H1 (cell line): ENCODE measurements at regions of chr3 and their contacts with region 1.

Region 1: DNA sequence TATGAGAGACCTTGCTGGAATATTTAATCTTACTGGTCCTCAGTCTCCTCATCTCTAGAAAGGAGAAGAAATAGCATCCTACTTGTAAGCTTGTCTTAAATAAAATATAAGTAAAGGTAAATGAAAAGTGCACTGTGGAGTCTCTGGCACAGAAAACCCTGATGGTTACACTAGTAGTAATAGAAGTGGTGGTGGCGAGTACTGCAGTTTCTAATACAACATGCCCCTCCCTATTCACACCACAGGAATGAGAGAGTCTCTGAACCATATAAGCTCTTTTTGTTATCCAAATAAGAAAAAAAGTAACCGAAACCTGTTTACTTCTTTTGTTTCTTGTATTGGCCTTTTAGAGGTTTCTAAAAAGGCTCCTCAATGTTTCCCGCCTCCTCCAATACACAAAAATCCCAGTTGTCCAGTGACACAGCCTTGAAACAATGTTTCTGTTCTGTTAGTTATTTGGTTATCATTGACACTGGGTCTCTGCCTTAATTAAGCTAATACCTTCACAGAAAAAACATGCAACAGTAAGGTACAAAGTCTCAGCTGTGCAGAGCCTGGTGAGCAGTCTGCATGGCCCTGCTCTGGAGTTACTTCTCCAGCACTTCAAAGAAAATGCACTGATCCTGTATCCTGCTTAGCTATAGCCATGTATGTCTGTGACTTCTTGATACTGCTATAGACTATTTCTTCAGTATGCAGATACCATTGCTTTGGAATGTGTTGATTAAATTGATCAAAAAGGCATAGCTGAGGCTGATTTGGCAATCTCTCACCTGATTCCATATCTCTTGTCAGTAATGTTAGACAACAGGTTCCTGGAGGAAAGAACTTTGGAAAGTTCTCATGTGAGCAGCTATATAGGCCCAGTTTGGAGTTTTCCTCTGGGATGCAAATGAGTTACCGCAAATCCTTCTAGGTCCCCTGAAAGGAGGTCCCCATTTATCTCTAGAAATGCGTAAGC is 315.6 kb upstream of the IL12A start:
- DNase-seq: no peak
- H3K4me3 ChIP-seq: no peak overlapping the region
- H3K27ac ChIP-seq: no peak overlapping the region
- H3K4me1 ChIP-seq: peaks cover 0 to 4% (median 1%) of the 10 kb centered on the region in 4 experiments; a peak in 2 of 7 replicates
- H3K27me3 ChIP-seq: no peaks in the 10 kb centered on the region
- CTCF ChIP-seq: peak in 1 of 3 experiments; percentile 11; a peak in 1 of 4 replicates
- EP300 ChIP-seq: no peak
- POLR2A ChIP-seq: no peak
- RAD21 ChIP-seq: no peak

Region 2: DNA sequence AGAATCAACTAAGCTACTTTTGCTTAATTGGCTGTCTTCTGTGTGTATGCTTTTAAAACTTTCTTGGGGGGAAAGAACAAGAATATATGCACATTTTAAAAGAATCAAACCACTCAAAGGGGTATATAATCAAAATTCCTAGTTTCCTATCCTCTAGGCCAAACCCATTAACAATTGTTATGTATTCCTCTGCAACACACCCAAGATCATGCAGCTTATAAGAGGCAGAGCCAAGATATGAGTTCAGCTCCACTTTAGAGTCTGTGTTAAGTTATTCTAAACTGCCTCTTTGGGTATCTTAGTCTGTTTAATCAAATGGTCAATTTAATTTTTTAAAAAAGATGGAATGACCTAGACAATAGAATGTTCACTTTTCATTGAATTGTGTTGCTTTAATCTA is 10.5 kb before region 1 on chr3:
- CTCF ChIA-PET with region 1: interaction called, 14 read pairs
- POLR2A ChIA-PET with region 1: no interaction called
- DNase-seq: no peak
- H3K4me3 ChIP-seq: no peak overlapping the region
- H3K27ac ChIP-seq: no peak overlapping the region
- H3K4me1 ChIP-seq: no peaks in the 10 kb centered on the region
- H3K27me3 ChIP-seq: no peaks in the 10 kb centered on the region
- CTCF ChIP-seq: no peak
- EP300 ChIP-seq: no peak
- POLR2A ChIP-seq: no peak
- RAD21 ChIP-seq: no peak

Region 3: DNA sequence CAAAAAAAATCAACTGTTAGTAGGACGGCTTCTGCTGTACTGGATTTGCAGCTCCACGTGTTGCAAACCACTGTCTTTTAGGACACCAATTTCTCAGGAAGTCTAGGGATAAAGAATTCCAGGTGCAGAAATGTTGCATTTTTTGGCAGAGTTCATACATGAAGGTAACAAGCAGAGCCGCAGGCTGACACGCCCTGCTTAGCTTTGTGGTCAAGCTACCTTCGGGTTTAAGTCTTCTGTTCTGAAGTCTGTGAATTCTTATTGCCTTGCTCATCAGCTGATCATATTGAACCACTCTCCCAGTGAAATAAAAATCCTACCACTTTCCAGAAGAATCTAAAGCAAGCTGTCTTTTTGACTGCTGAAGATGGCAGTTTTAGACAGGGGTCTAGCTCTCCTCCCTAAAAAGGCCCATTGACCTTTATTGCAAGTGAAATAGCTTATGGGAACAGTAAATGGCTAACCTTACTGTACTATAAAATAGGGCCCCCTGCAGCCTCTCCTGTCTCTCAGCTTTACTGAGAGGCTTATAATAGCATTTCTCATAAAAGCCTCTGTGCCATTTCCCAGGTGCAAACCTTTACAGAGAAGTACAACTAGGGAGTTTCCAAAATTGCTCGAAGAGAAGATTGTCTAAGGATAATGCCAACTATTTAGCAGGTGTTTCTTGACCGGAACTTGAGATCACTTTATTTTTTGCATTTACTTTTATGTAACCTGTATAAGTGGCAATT is 53.4 kb after region 1 on chr3:
- CTCF ChIA-PET with region 1: interaction called, 16 read pairs
- POLR2A ChIA-PET with region 1: no interaction called
- DNase-seq: no peak
- H3K4me3 ChIP-seq: no peak overlapping the region
- H3K27ac ChIP-seq: no peak overlapping the region
- H3K4me1 ChIP-seq: peaks cover 0 to 6% (median 0%) of the 10 kb centered on the region in 4 experiments; a peak in 1 of 7 replicates
- H3K27me3 ChIP-seq: no peaks in the 10 kb centered on the region
- CTCF ChIP-seq: no peak
- EP300 ChIP-seq: no peak
- POLR2A ChIP-seq: no peak
- RAD21 ChIP-seq: no peak

Region 4: DNA sequence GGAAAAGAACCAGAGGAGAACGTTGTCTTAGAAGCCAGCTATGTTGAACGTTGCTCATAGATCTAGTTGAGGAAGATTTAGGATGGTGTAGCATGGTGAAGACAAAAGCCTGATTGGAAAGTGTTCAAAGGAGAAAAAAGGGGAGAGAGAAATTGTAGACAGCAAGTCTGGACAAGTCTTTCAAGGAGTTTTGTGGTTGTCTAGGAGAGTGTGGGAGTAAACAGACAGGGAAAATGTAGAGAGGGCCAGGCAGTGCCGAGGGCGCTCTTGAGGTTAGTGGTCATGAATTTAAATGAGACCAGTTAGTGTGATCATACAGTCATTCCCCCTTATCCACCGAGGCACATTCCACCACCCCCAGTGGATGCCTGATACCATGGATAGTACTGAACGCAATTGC is 148.1 kb after region 1 on chr3:
- CTCF ChIA-PET with region 1: no interaction called
- POLR2A ChIA-PET with region 1: no interaction called
- DNase-seq: no peak
- H3K4me3 ChIP-seq: no peak overlapping the region
- H3K27ac ChIP-seq: no peak overlapping the region
- H3K4me1 ChIP-seq: peaks cover 2 to 3% (median 2%) of the 10 kb centered on the region in 4 experiments; a peak in 4 of 7 replicates
- H3K27me3 ChIP-seq: no peaks in the 10 kb centered on the region
- CTCF ChIP-seq: no peak
- EP300 ChIP-seq: no peak
- POLR2A ChIP-seq: no peak
- RAD21 ChIP-seq: no peak

Region 5: DNA sequence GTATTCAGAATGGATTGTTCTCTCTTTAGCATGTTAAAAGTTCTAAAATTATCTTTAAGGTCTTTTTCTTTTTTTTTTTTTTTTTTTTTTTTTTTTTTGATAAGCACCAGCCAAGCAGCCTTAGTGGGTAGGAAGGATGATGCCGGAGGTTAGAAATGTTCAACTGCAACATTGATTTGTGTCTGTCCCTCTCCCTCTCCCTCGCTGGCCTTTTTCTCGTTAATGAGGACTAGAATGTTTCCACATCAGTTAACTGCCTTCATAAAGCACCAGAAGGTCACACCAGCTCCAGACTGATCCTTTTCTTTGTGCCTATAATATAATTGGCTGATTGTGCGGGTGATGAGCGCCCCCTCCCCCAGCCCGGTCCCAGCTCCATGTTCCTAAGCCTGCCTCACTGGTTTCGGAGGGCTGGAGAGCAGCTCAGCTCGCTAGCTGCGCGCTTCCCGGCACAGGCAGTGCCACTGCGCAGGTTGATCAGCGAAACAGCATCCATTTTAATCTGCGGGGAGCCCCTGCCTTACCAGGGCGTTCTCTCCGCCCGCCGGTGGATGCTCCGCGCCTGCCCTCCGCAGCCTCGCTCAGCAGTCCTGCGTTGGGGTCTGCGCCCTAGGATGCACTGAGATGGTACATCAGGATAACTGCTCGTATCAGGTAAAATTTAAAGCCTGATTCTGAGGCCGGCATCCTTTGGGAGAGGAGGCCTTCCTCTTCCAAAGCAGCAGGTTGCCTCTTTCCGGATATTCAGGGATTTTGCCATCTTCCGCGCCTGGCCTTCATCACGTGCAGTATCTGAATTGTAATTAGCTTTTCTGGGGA is 166.8 kb after region 1 on chr3:
- CTCF ChIA-PET with region 1: no interaction called
- POLR2A ChIA-PET with region 1: no interaction called
- DNase-seq: peak; percentile 57 to 76
- H3K4me3 ChIP-seq: peak within 1 kb of the TSS; percentile 77 to 84 (median 80)
- H3K27ac ChIP-seq: peak within 1 kb of the TSS; percentile 93
- H3K4me1 ChIP-seq: peaks cover 0 to 8% (median 0%) of the 10 kb centered on the region in 4 experiments; a peak in 1 of 7 replicates
- H3K27me3 ChIP-seq: no peaks in the 10 kb centered on the region
- CTCF ChIP-seq: peak in 1 of 3 experiments; percentile 9; a peak in 1 of 4 replicates
- EP300 ChIP-seq: no peak
- POLR2A ChIP-seq: peak; percentile 88 to 89
- RAD21 ChIP-seq: no peak; a peak in 1 of 4 replicates

Region 6: DNA sequence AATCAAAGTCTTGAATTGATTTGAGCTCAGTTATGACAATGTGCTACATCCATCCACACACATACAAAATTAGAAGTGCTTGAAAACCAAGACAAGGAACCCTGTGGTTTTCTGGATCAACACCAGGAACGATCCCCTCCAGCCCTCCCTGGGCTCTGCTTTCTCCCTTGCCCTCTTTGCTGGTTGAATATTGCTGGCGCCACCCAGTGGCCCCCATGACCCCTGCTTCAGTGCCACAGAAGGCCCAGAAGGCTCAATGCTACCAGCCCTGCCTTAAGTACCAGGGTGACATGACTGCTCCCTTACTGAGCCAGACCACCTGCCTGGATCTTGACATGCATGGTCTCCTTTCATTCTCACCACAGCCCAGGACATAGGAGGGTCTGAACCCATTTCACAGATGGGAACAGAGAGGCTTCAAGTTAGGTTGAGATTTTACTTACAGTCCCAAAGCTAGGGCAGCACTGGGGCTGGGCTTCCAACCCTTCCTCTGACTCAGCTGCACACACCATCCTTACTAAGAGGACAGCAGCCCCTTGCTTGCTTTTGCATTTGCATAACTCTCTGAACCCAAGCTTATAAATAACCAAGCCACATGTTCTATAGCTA is 330.6 kb after region 1 on chr3:
- CTCF ChIA-PET with region 1: no interaction called
- POLR2A ChIA-PET with region 1: no interaction called
- DNase-seq: peak in 1 of 2 experiments; percentile 76
- H3K4me3 ChIP-seq: no peak overlapping the region
- H3K27ac ChIP-seq: no peak overlapping the region
- H3K4me1 ChIP-seq: peaks cover 0 to 6% (median 3%) of the 10 kb centered on the region in 4 experiments; a peak in 3 of 7 replicates
- H3K27me3 ChIP-seq: no peaks in the 10 kb centered on the region
- CTCF ChIP-seq: peak; percentile 76 to 78 (median 77)
- EP300 ChIP-seq: no peak
- POLR2A ChIP-seq: no peak
- RAD21 ChIP-seq: peak; percentile 65 to 76